ENCODE measurements at regions of chr1 and their contacts with region 1.

Region 1: GRCh38 chr1:152766795-152767194 is 8.1 kb upstream of the LCE1F start:
- DNase-seq: no peak
- H3K4me3 ChIP-seq: no peak overlapping the region
- H3K27ac ChIP-seq: no peak overlapping the region
- H3K4me1 ChIP-seq: no peaks in the 10 kb centered on the region
- H3K27me3 ChIP-seq: no peaks in the 10 kb centered on the region
- CTCF ChIP-seq: no peak
- EP300 ChIP-seq: no peak
- RAD21 ChIP-seq: no peak

Region 2: DNA sequence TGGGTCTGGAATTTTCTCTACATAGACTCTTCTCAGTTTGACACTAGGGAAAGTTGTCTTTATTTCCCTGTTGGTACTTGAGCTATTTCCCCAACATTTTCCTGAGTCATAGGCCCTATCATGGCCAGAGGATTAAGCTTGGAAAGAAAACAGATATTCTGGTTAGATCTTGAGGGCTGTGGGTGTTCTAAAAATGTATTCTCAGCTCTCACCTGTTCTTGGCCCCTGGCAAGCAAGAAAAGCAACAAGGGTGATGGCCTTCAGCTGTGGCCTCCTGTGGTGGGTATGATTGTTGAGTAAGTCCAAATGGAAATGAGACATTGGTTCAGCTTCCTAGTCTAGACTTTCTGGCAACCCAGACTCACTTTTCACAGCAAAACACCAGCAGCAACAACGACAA is 126.4 kb before region 1 on chr1:
- CTCF ChIA-PET with region 1: no interaction called
- POLR2A ChIA-PET with region 1: no interaction called
- DNase-seq: no peak
- H3K4me3 ChIP-seq: no peak overlapping the region
- H3K27ac ChIP-seq: no peak overlapping the region
- H3K4me1 ChIP-seq: no peaks in the 10 kb centered on the region
- H3K27me3 ChIP-seq: no peaks in the 10 kb centered on the region
- CTCF ChIP-seq: no peak
- EP300 ChIP-seq: no peak
- RAD21 ChIP-seq: no peak

Region 3: DNA sequence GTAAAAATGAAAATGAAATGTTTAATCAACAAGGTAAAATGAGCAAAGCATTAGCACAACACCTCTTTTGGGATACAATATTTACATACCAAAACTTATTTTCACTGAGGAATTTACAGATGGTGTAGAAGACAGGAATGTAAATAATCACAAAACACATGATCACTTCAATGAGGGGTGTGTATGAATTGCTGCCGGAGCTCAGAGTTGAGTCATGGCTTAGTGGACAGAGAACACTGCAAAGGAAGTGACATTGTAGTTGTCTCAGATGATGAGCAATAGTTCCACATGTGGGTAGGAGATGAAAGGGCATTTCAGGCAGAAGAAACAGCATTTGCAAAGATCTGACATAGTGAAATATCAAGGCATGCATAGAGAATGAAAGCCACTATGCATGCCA is 14.6 kb before region 1 on chr1:
- CTCF ChIA-PET with region 1: no interaction called
- POLR2A ChIA-PET with region 1: no interaction called
- DNase-seq: no peak
- H3K4me3 ChIP-seq: no peak overlapping the region
- H3K27ac ChIP-seq: no peak overlapping the region
- H3K4me1 ChIP-seq: no peaks in the 10 kb centered on the region
- H3K27me3 ChIP-seq: no peaks in the 10 kb centered on the region
- CTCF ChIP-seq: no peak
- EP300 ChIP-seq: no peak
- RAD21 ChIP-seq: no peak

Region 4: DNA sequence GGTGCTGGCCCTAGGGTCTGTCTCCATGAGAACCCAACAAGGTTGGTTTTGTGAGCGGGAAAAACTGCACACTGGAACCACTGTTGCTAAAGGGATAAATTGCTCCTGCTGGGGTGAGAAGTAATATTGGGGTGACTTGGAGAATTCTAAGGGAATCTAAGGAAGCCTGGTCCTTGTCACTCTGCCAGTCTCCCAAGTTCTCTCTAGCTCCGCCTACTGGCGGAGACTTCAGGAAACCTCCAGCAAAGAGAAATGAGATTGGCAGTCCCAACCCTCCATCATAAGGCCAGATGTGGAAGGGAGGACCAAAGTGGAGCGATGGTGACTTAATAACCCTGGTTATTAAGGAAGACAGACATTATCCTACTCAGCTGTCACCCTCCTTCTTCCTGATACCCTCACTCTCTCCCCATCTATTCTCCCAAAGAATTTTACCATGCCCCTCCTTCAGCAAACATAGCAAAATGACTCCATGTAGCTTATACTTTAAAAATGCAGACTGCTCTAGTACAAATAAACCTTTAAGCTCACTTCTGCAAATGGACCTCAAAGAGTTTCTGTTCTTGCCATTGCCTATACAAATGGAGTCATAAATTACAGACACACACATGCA is 10.8 kb after region 1 on chr1:
- CTCF ChIA-PET with region 1: interaction called, 10 read pairs
- POLR2A ChIA-PET with region 1: no interaction called
- DNase-seq: peak; percentile 35
- H3K4me3 ChIP-seq: no peak overlapping the region; a peak in 1 of 4 replicates
- H3K27ac ChIP-seq: no peak overlapping the region
- H3K4me1 ChIP-seq: no peaks in the 10 kb centered on the region
- H3K27me3 ChIP-seq: peaks cover 10% of the 10 kb centered on the region; the same call in 1 of the 2 replicates
- CTCF ChIP-seq: peak; percentile 36
- EP300 ChIP-seq: no peak
- RAD21 ChIP-seq: no peak

Region 5: GRCh38 chr1:152906023-152906565 is 139.3 kb after region 1 on chr1:
- CTCF ChIA-PET with region 1: no interaction called
- POLR2A ChIA-PET with region 1: no interaction called
- DNase-seq: no peak
- H3K4me3 ChIP-seq: 0 out of 4 replicates have a peak overlapping the region, but pooled peaks of 1 of the 2 experiments have one; percentile 3
- H3K27ac ChIP-seq: peak overlapping the region in 1 of 2 experiments; percentile 99; a peak in 2 of 4 replicates
- H3K4me1 ChIP-seq: peaks cover 0 to 30% of the 10 kb centered on the region in 2 experiments; a peak in 2 of 4 replicates
- H3K27me3 ChIP-seq: no peaks in the 10 kb centered on the region
- CTCF ChIP-seq: no peak
- EP300 ChIP-seq: peak in 1 of 2 experiments; percentile 72; a peak in 1 of 4 replicates
- RAD21 ChIP-seq: no peak